ENCODE measurements at regions of chr1 and their contacts with region 1.

Region 1: GRCh38 chr1:208245185-208245705 is 1.1 kb upstream of the PLXNA2 start:
- DNase-seq: peak; percentile 43 to 89 (median 68)
- ATAC-seq: peak; percentile 56 to 62
- H3K4me3 Mint-ChIP-seq: peak overlapping the region; percentile 75 to 90 (median 85)
- H3K27ac Mint-ChIP-seq: peak overlapping the region; percentile 12 to 91 (median 80)
- H3K4me1 Mint-ChIP-seq: peaks cover 8 to 21% (median 10%) of the 10 kb centered on the region in 4 donors
- H3K27me3 Mint-ChIP-seq: peaks cover 2 to 9% (median 5%) of the 10 kb centered on the region in 5 donors

Region 2: DNA sequence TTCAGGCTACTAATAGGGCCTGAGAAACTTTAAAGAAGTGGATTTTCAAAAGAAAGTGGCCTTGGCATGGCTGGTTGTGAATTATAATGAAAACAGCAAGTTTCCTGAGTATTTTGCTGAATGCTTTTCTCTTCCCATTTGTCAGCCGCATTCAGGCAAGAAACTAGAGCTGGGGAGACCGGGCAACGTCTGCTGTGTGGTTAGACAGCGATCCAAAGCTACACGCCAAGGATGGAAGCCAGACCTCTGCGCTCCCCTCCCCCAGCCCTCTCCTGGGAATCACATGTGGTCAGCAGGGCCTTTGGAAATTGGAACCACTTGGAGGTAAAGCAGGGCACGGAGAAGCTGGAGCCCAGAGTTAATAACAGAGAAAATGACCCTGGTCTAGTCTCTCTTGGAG is 220.2 kb before region 1 on chr1:
- POLR2A ChIA-PET with region 1: interaction called, 21 read pairs
- DNase-seq: no peak
- ATAC-seq: no peak
- H3K4me3 Mint-ChIP-seq: no peak overlapping the region
- H3K27ac Mint-ChIP-seq: no peak overlapping the region
- H3K4me1 Mint-ChIP-seq: no peaks in the 10 kb centered on the region
- H3K27me3 Mint-ChIP-seq: no peaks in the 10 kb centered on the region

Region 3: DNA sequence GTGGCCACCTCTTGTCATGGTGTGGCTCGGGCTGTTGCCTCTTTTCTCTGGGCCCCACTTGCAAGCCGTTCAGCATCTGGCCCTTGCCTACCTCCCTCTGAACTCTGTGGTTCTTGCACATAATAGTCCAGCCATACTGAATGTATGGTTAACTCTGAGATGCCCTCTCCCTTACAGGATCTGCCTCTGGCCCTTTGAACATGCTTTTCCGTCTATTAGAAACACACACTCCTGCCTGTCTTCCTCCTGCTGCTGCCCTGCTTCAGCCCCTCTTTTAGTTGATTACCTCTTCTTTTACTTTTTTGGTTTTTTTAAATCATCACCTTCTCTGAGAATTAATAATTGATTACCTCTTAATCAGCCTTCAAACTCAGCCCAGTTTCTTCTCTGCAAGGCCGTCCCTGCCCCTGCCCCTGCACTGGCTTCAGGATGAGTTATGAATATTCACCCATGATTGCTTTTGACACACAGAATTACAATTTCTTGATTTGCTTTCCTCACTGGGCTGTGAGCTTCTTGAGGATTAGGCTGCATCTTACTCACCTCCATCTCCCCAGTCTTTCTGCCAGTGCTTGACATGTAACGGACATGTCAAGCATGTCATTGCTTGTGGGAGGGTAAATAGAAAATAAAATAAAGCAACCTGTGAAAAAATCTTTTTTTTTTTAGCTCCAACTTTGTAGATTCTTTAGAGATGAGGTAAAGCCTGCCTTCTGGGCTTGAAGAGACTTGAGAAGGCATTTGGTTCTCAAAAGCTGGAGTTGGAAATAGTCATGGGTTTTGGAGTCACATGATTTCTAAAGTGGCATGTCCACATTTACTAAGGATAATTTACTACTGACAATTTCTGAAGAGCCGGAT is 159.4 kb before region 1 on chr1:
- POLR2A ChIA-PET with region 1: interaction called, 14 read pairs
- DNase-seq: no peak
- ATAC-seq: no peak
- H3K4me3 Mint-ChIP-seq: peak overlapping the region; percentile 73 to 92 (median 83)
- H3K27ac Mint-ChIP-seq: peak overlapping the region; percentile 85 to 97 (median 96)
- H3K4me1 Mint-ChIP-seq: peaks cover 14 to 23% (median 21%) of the 10 kb centered on the region in 4 donors
- H3K27me3 Mint-ChIP-seq: peaks cover 0 to 2% (median 0%) of the 10 kb centered on the region in 5 donors

Measured in naive thymus-derived CD8-positive, alpha-beta T cell (primary cell).